Caco-2 (cell line): ENCODE measurements at regions of chr4 and their contacts with region 1.

Region 1: DNA sequence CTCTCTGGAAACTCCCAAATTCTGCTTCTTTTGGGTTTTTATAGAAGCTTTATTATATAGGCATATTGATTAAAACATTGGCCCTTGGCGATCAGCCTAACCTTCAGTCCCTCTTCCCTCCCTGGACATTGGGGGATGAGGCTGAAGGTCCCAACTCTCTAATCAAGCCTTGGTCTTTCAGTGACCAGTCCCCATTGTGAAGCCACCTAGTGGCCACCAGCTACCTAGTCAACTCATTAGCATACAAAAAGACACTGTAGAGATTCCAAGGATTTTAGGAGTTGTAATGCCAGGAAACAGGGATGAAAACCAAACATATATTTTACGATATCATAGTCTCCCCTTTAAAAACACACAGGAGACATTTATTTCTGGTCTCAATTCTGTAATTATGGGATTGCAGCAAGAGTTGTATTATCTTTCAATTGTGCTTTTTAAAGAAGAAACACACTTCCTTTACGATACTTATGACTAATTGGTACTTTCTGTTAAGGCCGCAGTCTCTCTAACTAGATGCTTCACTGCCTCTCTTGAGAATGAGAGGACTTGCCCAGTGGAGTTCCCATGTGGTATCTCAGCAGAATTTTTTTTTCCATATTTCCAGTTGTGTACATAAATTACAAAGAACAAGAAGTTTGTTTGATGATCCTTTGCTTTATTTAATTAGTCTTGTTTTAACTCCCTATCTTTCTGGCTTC is 58.2 kb downstream of the WDR17 start:
- DNase-seq: peak; percentile 21 to 40
- H3K4me3 ChIP-seq: no peak overlapping the region
- H3K4me3 Mint-ChIP-seq: no peak overlapping the region
- H3K27ac Mint-ChIP-seq: no peak overlapping the region
- H3K4me1 ChIP-seq: no peaks in the 10 kb centered on the region
- H3K4me1 Mint-ChIP-seq: no peaks in the 10 kb centered on the region
- H3K27me3 ChIP-seq: no peaks in the 10 kb centered on the region
- H3K27me3 Mint-ChIP-seq: no peaks in the 10 kb centered on the region
- CTCF ChIP-seq: peak; percentile 70 to 76

Region 2: GRCh38 chr4:176034499-176034898 is 89.4 kb before region 1 on chr4:
- CTCF ChIA-PET with region 1: no interaction called
- POLR2A ChIA-PET with region 1: no interaction called
- intact Hi-C with region 1: loop called (anchors 1 kb)
- DNase-seq: peak in 1 of 2 experiments; percentile 24
- H3K4me3 ChIP-seq: no peak overlapping the region
- H3K4me3 Mint-ChIP-seq: no peak overlapping the region
- H3K27ac Mint-ChIP-seq: no peak overlapping the region
- H3K4me1 ChIP-seq: no peaks in the 10 kb centered on the region
- H3K4me1 Mint-ChIP-seq: no peaks in the 10 kb centered on the region
- H3K27me3 ChIP-seq: no peaks in the 10 kb centered on the region
- H3K27me3 Mint-ChIP-seq: no peaks in the 10 kb centered on the region
- CTCF ChIP-seq: no peak